CD4-positive, alpha-beta memory T cell (primary cell): ENCODE measurements at regions of chr16 and their contacts with region 1.

Region 1: GRCh38 chr16:85420501-85421337 is 192.4 kb upstream of the GSE1 start:
- DNase-seq: peak in 4 of 5 donors; percentile 72 to 80 (median 72)
- H3K4me3 ChIP-seq: no peak overlapping the region
- H3K4me3 Mint-ChIP-seq: no peak overlapping the region
- H3K27ac ChIP-seq: no peak overlapping the region
- H3K27ac Mint-ChIP-seq: peak overlapping the region in 2 of 7 donors; percentile 21 to 89
- H3K4me1 ChIP-seq: peaks cover 4% of the 10 kb centered on the region
- H3K4me1 Mint-ChIP-seq: peaks cover 0 to 2% (median under 1%) of the 10 kb centered on the region in 4 donors
- H3K27me3 ChIP-seq: no peaks in the 10 kb centered on the region
- H3K27me3 Mint-ChIP-seq: peaks cover 3 to 7% of the 10 kb centered on the region in 2 donors

Region 2: DNA sequence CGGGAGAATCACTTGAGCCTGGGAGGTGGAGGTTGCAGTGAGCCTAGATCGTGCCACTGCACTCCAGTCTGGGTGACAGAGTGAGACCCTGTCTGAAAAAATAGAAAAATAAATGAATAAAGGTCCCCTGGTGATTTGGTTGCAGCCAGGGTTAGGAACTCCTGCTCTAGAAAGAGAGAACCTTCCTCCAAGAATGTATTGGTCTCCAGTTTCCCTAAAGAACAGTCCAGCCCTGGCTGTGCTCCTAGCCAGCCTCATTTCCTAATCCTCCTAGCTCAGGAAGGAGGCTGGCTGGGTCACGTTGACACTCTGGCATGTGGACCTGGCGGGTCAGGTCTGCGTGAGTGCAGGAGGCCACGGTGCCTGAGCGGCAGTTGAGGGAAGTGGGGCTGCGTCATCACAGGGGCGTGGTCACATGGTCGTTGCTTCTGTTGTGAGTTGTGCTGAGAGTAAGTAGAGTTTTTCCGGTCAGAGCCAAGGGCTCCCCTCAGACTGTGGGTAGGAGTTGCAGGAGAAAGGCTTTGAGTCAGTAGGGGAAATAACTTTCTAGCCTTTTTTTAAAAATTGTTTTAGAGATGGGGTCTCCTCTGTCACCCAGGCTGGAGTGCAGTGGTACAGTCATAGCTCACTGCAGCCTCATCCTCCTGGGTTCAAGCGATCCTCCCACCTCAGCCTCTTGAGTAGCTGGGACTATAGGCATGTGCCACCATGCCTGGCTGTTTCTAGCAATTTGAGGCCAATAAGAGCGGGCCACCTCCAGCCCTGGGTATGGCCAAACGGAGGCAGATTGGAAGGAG is 114.5 kb before region 1 on chr16:
- CTCF ChIA-PET with region 1: interaction called, 4 read pairs
- POLR2A ChIA-PET with region 1: no interaction called
- intact Hi-C with region 1: loop called (anchors 1 kb)
- DNase-seq: peak; percentile 58 to 75 (median 62)
- H3K4me3 ChIP-seq: no peak overlapping the region
- H3K4me3 Mint-ChIP-seq: peak overlapping the region; percentile 31 to 62 (median 51)
- H3K27ac ChIP-seq: no peak overlapping the region
- H3K27ac Mint-ChIP-seq: peak overlapping the region; percentile 24 to 87 (median 69)
- H3K4me1 ChIP-seq: peaks cover 47% of the 10 kb centered on the region
- H3K4me1 Mint-ChIP-seq: peaks cover 12 to 48% (median 18%) of the 10 kb centered on the region in 4 donors
- H3K27me3 ChIP-seq: no peaks in the 10 kb centered on the region
- H3K27me3 Mint-ChIP-seq: peaks cover 0 to 11% of the 10 kb centered on the region in 2 donors

Region 3: GRCh38 chr16:85448557-85449197 is 28.0 kb after region 1 on chr16:
- CTCF ChIA-PET with region 1: interaction called, 33 read pairs
- POLR2A ChIA-PET with region 1: no interaction called
- intact Hi-C with region 1: no loop called
- DNase-seq: peak in 4 of 5 donors; percentile 46 to 55 (median 51)
- H3K4me3 ChIP-seq: no peak overlapping the region
- H3K4me3 Mint-ChIP-seq: peak overlapping the region; percentile 18 to 82 (median 72)
- H3K27ac ChIP-seq: no peak overlapping the region
- H3K27ac Mint-ChIP-seq: peak overlapping the region; percentile 83 to 91 (median 89)
- H3K4me1 ChIP-seq: peaks cover 33% of the 10 kb centered on the region
- H3K4me1 Mint-ChIP-seq: peaks cover 13 to 39% (median 16%) of the 10 kb centered on the region in 4 donors
- H3K27me3 ChIP-seq: no peaks in the 10 kb centered on the region
- H3K27me3 Mint-ChIP-seq: no peaks in the 10 kb centered on the region

Region 4: DNA sequence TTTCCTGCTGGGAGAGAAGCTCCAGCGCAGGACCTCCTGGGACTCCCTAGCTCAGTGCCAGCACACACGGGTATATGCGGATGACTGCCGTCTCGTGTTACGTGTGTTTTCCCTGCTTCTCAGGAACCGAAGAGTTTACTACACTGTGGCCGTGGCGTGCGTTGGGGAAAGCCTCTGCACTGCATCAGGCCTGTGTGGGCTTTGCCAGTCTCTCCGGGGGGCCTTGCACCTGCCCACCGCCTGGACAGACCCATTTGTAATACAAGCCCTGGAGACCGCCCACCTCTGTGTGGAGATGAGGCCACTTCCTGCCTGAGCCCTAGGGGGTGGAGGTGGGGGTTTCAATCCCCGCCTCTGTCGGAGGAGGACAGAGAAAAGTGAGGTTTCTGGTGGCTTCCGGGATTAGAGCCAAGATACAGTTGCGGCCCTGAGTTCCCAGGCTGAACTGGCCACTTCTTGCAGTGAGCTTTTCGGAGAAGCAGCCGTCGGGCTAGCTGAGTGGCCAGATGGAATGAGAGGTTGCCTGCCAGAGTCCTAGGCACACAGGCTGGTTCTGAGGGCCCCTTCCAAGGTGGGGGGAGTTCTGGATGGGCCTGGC is 149.0 kb after region 1 on chr16:
- CTCF ChIA-PET with region 1: interaction called, 21 read pairs
- POLR2A ChIA-PET with region 1: no interaction called
- intact Hi-C with region 1: no loop called
- DNase-seq: peak in 3 of 5 donors; percentile 21 to 52 (median 30)
- H3K4me3 ChIP-seq: peak overlapping the region in 1 of 2 donors; percentile 17
- H3K4me3 Mint-ChIP-seq: peak overlapping the region; percentile 33 to 82 (median 72)
- H3K27ac ChIP-seq: peak overlapping the region; percentile 16
- H3K27ac Mint-ChIP-seq: peak overlapping the region; percentile 79 to 92 (median 88)
- H3K4me1 ChIP-seq: peaks cover 47% of the 10 kb centered on the region
- H3K4me1 Mint-ChIP-seq: peaks cover 34 to 73% (median 54%) of the 10 kb centered on the region in 4 donors
- H3K27me3 ChIP-seq: no peaks in the 10 kb centered on the region
- H3K27me3 Mint-ChIP-seq: no peaks in the 10 kb centered on the region

Region 5: DNA sequence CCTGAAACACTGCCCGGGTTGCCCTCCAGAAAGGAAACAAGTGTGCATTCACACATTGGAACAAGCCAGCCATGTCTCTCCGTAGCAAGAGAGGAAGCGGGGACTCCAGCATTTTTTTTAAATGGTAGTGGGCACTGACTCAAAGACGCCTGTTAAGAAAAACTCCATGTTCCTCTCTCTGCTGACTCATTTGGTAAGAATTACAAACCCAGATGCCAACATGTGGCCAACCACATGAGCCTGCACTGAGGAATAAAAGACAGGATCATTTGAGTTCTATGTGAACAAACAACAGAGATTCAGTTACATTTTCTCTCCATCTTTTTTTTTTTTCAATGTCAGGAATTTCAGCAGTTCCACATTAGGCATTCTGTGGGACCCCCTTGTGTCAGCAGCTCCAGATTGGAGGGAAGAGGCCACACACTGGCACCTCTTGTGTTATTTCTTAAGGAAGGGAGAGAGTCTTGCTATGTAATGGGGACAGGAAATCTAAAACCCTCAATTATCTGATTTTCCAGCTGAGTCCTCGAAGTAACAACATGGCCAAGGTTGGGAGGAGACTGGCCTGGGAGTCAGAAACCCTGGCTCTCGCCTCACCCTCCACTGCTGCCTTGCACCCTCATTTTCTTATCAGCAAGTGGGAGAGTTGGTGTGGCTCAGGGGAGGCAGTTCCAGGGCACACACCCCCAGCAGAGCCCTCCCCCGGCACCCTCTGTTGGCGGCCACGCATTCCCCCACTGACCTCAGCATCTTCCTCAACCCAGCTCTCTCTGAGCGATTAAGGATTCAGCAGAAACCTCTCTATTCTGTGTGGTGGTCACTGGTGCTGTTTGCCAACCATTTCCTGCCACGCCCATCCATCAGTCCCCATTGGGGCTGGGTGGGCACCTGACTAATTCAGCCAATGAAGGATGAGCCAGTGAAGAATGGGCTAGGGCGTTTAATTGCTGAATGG is 1330.6 kb after region 1 on chr16:
- CTCF ChIA-PET with region 1: no interaction called
- POLR2A ChIA-PET with region 1: no interaction called
- intact Hi-C with region 1: no loop called
- DNase-seq: no peak
- H3K4me3 ChIP-seq: no peak overlapping the region
- H3K4me3 Mint-ChIP-seq: no peak overlapping the region
- H3K27ac ChIP-seq: no peak overlapping the region
- H3K27ac Mint-ChIP-seq: no peak overlapping the region
- H3K4me1 ChIP-seq: no peaks in the 10 kb centered on the region
- H3K4me1 Mint-ChIP-seq: no peaks in the 10 kb centered on the region
- H3K27me3 ChIP-seq: no peaks in the 10 kb centered on the region
- H3K27me3 Mint-ChIP-seq: peaks cover under 1 to 4% of the 10 kb centered on the region in 2 donors